HAP-1 (cell line): ENCODE measurements at regions of chr16 and their contacts with region 1.

Region 1: GRCh38 chr16:30997000-30997886 is 12.2 kb downstream of the HSD3B7 start:
- DNase-seq: peak; percentile 42 to 85
- H3K4me3 ChIP-seq: peak overlapping the region; percentile 9; the same call in 1 of the 2 replicates
- H3K4me1 ChIP-seq: no peaks in the 10 kb centered on the region
- H3K27me3 ChIP-seq: no peaks in the 10 kb centered on the region

Region 2: GRCh38 chr16:30761928-30762810 is 235.1 kb before region 1 on chr16 and contains the starts of genes CFAP119 and RNF40:
- in situ Hi-C with region 1: no loop called
- DNase-seq: peak; percentile 96 to 99
- H3K4me3 ChIP-seq: peak within 1 kb of the TSS; percentile 96
- H3K4me1 ChIP-seq: peaks cover 15% of the 10 kb centered on the region
- H3K27me3 ChIP-seq: no peaks in the 10 kb centered on the region

Region 3: DNA sequence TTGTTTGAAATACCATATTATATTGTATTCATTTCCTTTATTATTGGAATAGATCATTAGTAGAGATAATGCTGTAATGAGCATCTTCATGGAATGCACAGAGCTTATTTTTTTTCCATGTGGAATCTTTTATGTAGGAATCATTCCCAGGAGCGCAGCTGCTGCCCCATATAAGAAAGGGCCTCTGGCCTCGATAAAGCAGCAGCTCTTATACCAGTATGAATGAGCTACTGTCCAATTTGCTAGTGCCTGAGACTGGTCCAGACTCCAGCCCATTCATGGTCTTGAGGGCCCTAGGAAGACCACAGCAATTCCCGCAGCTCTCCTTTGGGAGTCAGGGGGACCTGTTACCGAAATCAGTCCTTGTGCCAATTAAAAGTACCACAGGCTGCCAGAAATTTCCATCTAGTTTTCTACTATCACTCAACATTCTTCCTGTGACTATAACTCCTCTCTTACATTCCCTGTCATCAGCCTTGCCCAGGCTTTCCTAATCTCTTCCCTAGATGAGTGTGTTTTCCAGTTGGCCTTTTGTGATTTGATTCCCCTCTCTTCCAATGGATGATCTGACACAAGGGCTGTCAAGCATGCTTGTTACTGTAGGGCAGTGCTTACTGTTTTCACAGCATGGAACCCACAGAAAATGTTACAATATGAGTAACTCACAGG is 443.4 kb after region 1 on chr16:
- in situ Hi-C with region 1: loop called (anchors 10 kb)
- DNase-seq: no peak
- H3K4me3 ChIP-seq: no peak overlapping the region
- H3K4me1 ChIP-seq: peaks cover 4% of the 10 kb centered on the region; the same call in 1 of the 2 replicates
- H3K27me3 ChIP-seq: no peaks in the 10 kb centered on the region

Region 4: DNA sequence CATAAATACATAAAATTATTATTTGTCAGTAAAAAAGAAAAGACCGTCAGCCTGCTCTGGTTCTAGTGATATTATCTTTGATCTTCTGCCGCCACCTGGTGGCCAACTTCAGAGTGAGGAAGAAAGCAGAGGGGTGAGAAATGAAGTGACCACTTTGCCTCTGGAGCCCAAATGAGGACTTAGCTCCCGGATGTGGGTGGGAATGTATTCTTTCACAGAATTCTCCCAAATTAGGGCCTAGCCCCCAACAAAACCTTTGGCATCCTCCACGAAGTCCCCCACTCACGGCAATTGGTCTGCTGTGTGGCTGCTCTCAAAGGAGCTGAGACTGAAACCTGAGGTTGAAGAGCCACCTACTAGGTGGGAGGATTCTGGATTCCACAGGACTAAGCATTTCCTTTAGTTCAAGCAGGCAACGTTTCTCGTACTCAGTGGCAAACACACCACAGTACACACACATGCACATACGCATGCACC is 871.5 kb after region 1 on chr16:
- in situ Hi-C with region 1: loop called (anchors 10 kb)
- DNase-seq: peak; percentile 64 to 87
- H3K4me3 ChIP-seq: no peak overlapping the region
- H3K4me1 ChIP-seq: no peaks in the 10 kb centered on the region
- H3K27me3 ChIP-seq: peaks cover 9% of the 10 kb centered on the region